OCI-LY7 (cell line): ENCODE measurements at regions of chr1 and their contacts with region 1.

Region 1: DNA sequence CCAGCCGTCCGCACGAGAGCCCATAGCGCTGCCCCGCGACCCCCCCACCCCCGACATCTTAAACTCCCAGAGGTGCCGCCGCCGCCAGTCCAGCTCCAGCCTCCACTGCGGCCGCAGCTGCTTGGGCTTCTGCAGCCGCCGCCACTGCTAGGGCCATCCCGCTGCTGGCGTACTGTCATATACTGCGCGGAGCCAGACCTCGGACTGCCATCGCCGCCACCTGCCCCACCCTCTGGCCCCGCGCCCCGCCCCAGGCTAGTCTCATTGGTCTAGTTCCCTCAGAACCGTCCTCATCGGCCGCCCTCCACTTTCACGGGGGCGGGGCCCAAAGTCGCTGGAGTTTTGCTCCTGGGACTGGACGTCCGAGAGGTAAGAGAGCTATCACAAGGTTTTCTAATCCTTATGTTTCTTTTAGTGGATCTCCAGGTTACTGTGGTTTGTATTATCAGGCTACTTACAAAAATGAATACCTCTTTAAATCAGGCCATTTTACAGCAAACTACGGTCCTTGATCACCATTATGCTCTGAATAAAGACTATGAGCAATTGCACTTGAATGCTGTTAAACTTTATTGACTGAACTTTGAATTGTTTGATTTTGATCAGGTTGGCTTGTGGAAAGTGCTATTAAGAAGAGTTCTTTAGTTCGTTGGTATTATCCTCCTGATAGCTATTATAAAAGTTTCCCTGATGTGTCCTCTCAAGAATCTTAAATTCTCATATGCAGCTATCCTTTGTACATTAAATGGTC is 2.8 kb upstream of the CD1D start:
- DNase-seq: peak; percentile 85
- H3K4me3 ChIP-seq: peak overlapping the region; percentile 68
- H3K27ac ChIP-seq: peak overlapping the region; percentile 86
- H3K4me1 ChIP-seq: peaks cover 69% of the 10 kb centered on the region
- CTCF ChIP-seq: no peak

Region 2: GRCh38 chr1:158163000-158163947 is 14.6 kb before region 1 on chr1:
- CTCF ChIA-PET with region 1: no interaction called
- POLR2A ChIA-PET with region 1: interaction called, 10 read pairs
- intact Hi-C with region 1: no loop called
- DNase-seq: peak; percentile 30
- H3K4me3 ChIP-seq: peak overlapping the region; percentile 21
- H3K27ac ChIP-seq: no peak overlapping the region
- H3K4me1 ChIP-seq: peaks cover 32% of the 10 kb centered on the region
- CTCF ChIP-seq: no peak

Region 3: DNA sequence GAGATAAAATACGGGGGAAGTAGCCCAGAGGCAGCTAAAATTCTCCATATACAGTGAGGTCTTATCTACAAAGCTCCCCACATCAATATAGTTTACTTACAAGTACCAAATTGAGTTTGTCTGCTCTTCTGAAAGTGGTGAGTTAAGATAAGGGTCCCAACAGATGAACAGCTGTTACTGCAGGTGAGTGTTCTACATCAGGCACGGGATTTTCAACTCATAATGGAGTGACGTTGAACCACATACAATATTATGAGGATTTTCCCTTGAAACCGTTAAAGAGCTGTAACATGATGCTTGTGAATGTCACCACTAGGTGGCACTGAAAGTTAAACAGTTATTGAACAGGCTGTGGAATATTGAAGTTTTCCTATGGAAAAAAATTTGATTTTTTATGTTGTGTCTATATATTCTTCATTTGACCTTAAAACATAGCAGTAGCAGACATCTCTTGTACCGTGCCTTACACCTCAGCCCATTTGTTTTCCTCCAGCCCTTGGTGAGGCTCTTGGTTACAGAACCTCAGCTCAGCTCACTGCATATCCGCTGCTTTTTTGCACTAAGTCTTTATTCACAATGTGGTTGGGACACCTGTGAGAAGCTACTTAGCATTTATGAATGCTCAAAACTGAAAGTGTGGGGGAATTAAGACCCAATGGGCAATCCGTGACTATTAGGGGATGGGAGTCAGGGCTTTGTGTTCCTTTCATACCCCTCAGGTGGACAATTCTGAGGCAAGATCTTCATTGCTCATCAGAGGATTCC is 26.0 kb after region 1 on chr1:
- CTCF ChIA-PET with region 1: no interaction called
- POLR2A ChIA-PET with region 1: interaction called, 10 read pairs
- intact Hi-C with region 1: loop called (anchors 2 kb)
- DNase-seq: peak; percentile 75
- H3K4me3 ChIP-seq: no peak overlapping the region
- H3K27ac ChIP-seq: no peak overlapping the region
- H3K4me1 ChIP-seq: peaks cover 6% of the 10 kb centered on the region
- CTCF ChIP-seq: peak; percentile 98

Region 4: DNA sequence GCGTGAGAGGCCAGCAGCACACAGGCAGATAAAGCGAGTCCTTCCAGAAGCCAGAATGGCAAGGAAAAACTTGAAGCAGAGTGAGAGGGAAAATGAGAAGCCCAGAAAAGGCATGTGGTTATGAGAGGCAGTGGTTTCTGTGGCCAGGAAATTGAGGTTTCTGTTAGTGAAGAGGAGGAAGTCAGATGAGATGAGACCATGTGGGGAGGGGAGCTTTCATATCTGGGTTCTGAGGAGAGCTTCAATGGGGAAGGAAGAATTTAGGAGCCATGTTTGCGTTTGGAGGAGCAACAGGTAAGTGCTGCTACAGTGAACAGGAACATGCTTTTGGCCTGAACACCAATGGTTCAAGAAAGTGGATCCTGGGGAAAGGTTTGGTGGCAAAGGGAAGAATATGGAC is 70.2 kb after region 1 on chr1:
- CTCF ChIA-PET with region 1: no interaction called
- POLR2A ChIA-PET with region 1: interaction called, 4 read pairs
- intact Hi-C with region 1: loop called (anchors 2 kb)
- DNase-seq: peak; percentile 81
- H3K4me3 ChIP-seq: peak overlapping the region; percentile 16
- H3K27ac ChIP-seq: no peak overlapping the region
- H3K4me1 ChIP-seq: peaks cover 25% of the 10 kb centered on the region
- CTCF ChIP-seq: no peak

Region 5: DNA sequence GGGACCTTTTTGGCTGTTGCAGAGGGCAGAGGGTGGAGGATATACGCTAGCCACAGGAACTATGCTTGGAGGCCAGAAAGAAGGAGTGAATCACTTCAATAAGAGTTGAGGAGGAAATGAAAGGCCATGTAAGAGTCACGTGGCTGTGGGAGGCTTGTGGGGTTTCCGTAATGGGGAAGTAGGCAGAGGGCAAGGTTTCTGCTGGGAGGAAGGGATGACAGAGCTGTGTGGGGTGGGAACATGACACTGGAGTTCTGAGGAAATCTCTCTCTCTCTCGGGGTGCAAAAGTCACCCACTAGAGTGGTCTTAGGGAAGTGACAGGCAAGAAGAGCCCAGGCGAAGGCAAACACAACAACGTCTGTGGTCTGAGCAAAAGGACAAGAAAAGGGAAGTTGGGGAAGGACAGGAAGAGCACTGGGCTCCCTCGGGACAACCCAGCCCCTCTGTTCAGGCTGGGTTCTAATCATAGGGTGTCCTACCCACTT is 107.9 kb after region 1 on chr1:
- CTCF ChIA-PET with region 1: no interaction called
- POLR2A ChIA-PET with region 1: interaction called, 4 read pairs
- intact Hi-C with region 1: loop called (anchors 1 kb)
- DNase-seq: peak; percentile 92
- H3K4me3 ChIP-seq: peak overlapping the region; percentile 61
- H3K27ac ChIP-seq: peak overlapping the region; percentile 89
- H3K4me1 ChIP-seq: peaks cover 78% of the 10 kb centered on the region
- CTCF ChIP-seq: no peak